ENCODE measurements at regions of chr2 and their contacts with region 1.

Region 1: DNA sequence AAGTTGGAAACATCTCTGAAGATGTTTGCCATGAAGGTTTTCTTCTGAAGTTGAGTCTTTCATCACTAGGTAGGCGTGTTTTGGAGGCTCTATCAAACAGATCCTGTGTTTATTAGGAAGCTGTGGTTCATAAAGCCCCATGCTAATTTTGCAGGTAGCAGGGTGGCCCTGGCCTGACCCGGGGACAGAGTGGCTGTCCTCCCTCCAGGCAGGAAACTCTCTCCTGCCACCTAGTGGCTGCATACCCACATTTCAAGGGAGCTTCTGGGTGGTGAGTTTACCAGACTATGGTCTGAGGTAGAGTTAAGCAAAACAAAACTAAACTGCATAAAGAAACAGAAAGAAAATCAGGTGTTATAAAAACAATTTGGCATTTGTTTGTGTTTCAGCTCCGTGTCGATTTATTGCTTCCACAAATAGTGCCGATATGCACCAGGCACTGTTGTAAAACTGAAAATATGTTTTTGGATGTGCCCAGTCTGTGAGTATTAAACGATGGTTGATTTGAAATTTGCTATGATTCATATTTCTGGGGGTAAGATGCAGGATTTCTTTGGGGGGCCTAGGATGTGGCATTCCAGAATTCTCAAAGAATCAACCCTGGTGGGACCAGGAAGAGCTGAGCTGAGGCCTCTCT is 26.0 kb upstream of the IL37 start:
- DNase-seq: peak; percentile 39
- ATAC-seq: peak; percentile 82
- H3K4me3 ChIP-seq: no peak overlapping the region
- H3K27ac ChIP-seq: no peak overlapping the region
- H3K4me1 ChIP-seq: peaks cover 32% of the 10 kb centered on the region
- H3K27me3 ChIP-seq: no peaks in the 10 kb centered on the region
- CTCF ChIP-seq: peak; percentile 92 to 93 (median 93)
- EP300 ChIP-seq: no peak
- POLR2A ChIP-seq: no peak
- RAD21 ChIP-seq: peak; percentile 94

Region 2: GRCh38 chr2:112321375-112322320 is 563.3 kb before region 1 on chr2:
- CTCF ChIA-PET with region 1: no interaction called
- POLR2A ChIA-PET with region 1: no interaction called
- RAD21 ChIA-PET with region 1: no interaction called
- SMC1A ChIA-PET with region 1: no interaction called
- in situ Hi-C with region 1: no loop called
- intact Hi-C with region 1: no loop called
- DNase-seq: no peak
- ATAC-seq: no peak
- H3K4me3 ChIP-seq: no peak overlapping the region
- H3K27ac ChIP-seq: no peak overlapping the region
- H3K4me1 ChIP-seq: no peaks in the 10 kb centered on the region
- H3K27me3 ChIP-seq: no peaks in the 10 kb centered on the region
- CTCF ChIP-seq: no peak
- EP300 ChIP-seq: no peak
- POLR2A ChIP-seq: no peak
- RAD21 ChIP-seq: no peak

Region 3: GRCh38 chr2:112626604-112627059 is 258.4 kb before region 1 on chr2:
- CTCF ChIA-PET with region 1: interaction called, 16 read pairs
- POLR2A ChIA-PET with region 1: no interaction called
- RAD21 ChIA-PET with region 1: interaction called, 10 read pairs
- SMC1A ChIA-PET with region 1: interaction called, 9 read pairs
- in situ Hi-C with region 1: no loop called
- intact Hi-C with region 1: no loop called
- DNase-seq: no peak
- ATAC-seq: peak; percentile 86
- H3K4me3 ChIP-seq: no peak overlapping the region
- H3K27ac ChIP-seq: no peak overlapping the region
- H3K4me1 ChIP-seq: peaks cover 19% of the 10 kb centered on the region
- H3K27me3 ChIP-seq: no peaks in the 10 kb centered on the region
- CTCF ChIP-seq: peak; percentile 91 to 95 (median 92)
- EP300 ChIP-seq: no peak
- POLR2A ChIP-seq: no peak
- RAD21 ChIP-seq: peak; percentile 94

Region 4: DNA sequence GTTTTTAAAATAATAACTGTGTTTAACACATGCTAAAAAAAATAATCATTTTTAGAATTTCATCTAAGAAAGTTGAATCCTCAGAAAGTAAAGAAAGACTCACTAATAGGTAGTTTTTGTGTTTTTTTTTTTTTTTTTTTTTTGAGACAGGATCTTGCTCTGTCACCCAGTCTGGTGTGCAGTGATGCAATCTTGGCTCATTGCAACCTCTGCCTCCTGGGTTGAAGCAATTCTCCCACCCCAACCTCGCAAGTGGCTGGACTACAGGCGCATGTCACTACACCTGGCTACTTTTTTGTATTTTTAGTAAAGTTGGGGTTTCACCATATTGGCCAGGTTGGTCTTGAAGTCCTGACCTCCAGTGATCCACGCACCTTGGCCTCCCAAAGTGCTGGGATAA is 127.7 kb before region 1 on chr2:
- CTCF ChIA-PET with region 1: interaction called, 496 read pairs
- POLR2A ChIA-PET with region 1: interaction called, 4 read pairs
- RAD21 ChIA-PET with region 1: interaction called, 281 read pairs
- SMC1A ChIA-PET with region 1: interaction called, 362 read pairs
- in situ Hi-C with region 1: no loop called
- intact Hi-C with region 1: no loop called
- DNase-seq: no peak
- ATAC-seq: no peak
- H3K4me3 ChIP-seq: no peak overlapping the region
- H3K27ac ChIP-seq: no peak overlapping the region
- H3K4me1 ChIP-seq: no peaks in the 10 kb centered on the region
- H3K27me3 ChIP-seq: no peaks in the 10 kb centered on the region
- CTCF ChIP-seq: no peak
- EP300 ChIP-seq: no peak
- POLR2A ChIP-seq: no peak
- RAD21 ChIP-seq: no peak

Region 5: DNA sequence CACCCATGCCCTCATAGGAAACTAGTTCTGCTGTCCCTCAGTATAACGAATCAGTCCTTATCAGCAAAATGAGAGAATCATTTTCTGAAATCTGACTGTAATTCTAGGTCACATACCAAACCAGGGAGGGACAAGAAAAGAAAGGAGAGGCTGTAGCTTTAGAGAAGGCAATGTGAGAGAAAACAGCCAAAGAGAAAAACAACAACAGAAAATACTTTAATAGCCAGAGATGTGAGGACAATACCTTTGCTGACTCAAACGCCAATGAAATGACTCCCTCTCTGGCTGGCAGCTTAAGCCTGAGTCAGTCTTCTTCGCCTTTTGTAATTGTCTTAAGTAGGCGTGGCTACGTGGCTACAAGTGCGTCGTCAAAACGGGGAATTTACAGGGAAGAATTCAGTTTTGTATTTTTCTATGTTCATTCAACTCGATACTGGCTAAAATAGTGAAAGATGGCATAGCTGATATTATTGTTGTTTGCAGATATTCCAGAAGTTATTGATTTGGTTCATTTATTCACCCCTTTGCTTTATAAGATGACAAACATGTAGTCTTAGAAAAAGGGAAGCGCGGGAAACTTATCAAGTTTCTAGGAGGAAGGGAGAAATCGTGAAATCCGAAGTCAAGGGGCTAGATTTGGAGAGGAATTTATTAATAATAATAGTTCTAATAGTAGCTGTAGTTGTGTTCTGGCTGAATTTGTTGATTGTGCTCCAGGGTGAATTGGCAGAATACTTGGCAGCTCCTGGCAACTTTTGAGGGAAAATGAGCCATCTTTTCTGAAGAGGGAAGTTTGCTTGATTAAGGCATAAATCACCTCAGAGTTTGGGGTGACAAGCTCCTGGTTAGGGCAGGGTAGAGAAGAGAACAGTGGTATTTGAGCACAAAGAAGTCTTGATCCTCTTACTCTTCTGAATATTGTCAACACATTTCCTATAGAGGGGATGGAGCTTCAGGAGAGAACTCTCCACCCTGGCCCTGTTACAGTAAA is 100.5 kb before region 1 on chr2 and contains the start of gene IL1A:
- CTCF ChIA-PET with region 1: interaction called, 17 read pairs
- POLR2A ChIA-PET with region 1: interaction called, 3 read pairs
- RAD21 ChIA-PET with region 1: interaction called, 22 read pairs
- SMC1A ChIA-PET with region 1: interaction called, 10 read pairs
- in situ Hi-C with region 1: no loop called
- intact Hi-C with region 1: no loop called
- DNase-seq: no peak
- ATAC-seq: no peak
- H3K4me3 ChIP-seq: no peak within 1 kb of the TSS
- H3K27ac ChIP-seq: peak within 1 kb of the TSS; percentile 62
- H3K4me1 ChIP-seq: peaks cover 23% of the 10 kb centered on the region
- H3K27me3 ChIP-seq: no peaks in the 10 kb centered on the region
- CTCF ChIP-seq: no peak
- EP300 ChIP-seq: no peak
- POLR2A ChIP-seq: peak; percentile 70
- RAD21 ChIP-seq: no peak
- polyA plus RNA-seq, gene IL1A: 5.7 to 8.7 TPM

Region 6: DNA sequence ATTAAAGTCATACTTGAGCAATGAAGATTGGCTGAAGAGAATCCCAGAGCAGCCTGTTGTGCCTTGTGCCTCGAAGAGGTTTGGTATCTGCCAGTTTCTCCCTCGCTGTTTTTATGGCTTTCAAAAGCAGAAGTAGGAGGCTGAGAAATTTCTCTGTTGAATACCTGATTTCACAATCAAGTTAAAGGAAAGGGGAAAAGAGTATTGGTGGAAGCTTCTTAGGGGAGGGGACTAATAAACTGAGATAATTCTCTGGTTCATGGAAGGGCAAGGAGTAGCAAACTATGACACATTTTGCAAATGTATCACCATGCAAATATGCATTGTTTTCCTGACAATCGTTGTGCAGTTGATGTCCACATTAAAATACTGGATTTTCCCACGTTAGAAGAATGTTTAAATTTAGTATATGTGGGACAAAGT is 48.3 kb before region 1 on chr2 and contains the start of gene IL1B:
- CTCF ChIA-PET with region 1: interaction called, 7 read pairs
- POLR2A ChIA-PET with region 1: interaction called, 3 read pairs
- RAD21 ChIA-PET with region 1: interaction called, 7 read pairs
- SMC1A ChIA-PET with region 1: interaction called, 33 read pairs
- in situ Hi-C with region 1: no loop called
- intact Hi-C with region 1: loop called (anchors 2 kb)
- DNase-seq: no peak
- ATAC-seq: peak; percentile 21
- H3K4me3 ChIP-seq: no peak within 1 kb of the TSS
- H3K27ac ChIP-seq: no peak within 1 kb of the TSS
- H3K4me1 ChIP-seq: peaks cover 34% of the 10 kb centered on the region
- H3K27me3 ChIP-seq: no peaks in the 10 kb centered on the region
- CTCF ChIP-seq: no peak
- EP300 ChIP-seq: no peak
- POLR2A ChIP-seq: no peak
- RAD21 ChIP-seq: no peak
- polyA plus RNA-seq, gene IL1B: 0.57 to 1.6 TPM

Region 7: GRCh38 chr2:112928856-112929255 is 43.9 kb after region 1 on chr2:
- CTCF ChIA-PET with region 1: interaction called, 12 read pairs
- POLR2A ChIA-PET with region 1: no interaction called
- RAD21 ChIA-PET with region 1: interaction called, 4 read pairs
- SMC1A ChIA-PET with region 1: interaction called, 5 read pairs
- in situ Hi-C with region 1: no loop called
- intact Hi-C with region 1: no loop called
- DNase-seq: no peak
- ATAC-seq: no peak
- H3K4me3 ChIP-seq: no peak overlapping the region
- H3K27ac ChIP-seq: no peak overlapping the region
- H3K4me1 ChIP-seq: no peaks in the 10 kb centered on the region
- H3K27me3 ChIP-seq: peaks cover 0 to 4% of the 10 kb centered on the region in 2 experiments; a peak in 1 of 4 replicates
- CTCF ChIP-seq: no peak
- EP300 ChIP-seq: no peak
- POLR2A ChIP-seq: no peak
- RAD21 ChIP-seq: no peak

Region 8: DNA sequence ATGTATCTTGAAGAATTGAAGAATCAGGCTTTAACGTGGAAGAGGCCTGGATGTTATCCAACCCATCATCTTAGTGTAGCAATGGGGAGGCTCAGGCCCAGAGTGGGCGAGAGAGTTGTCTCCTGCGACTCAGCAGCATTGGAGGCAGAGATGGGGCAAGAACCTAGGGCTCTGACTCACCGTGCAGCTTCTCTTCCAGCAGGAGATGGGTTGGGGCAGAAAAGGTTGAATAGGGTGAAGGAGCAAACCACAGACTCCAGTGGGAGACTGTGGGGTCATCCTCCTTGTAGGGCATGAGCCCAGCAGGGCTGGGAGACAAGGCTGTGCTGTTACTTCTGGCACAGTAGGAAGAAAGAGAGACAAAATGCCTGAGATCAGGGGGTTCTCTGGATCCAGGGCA is 175.4 kb after region 1 on chr2:
- CTCF ChIA-PET with region 1: no interaction called
- POLR2A ChIA-PET with region 1: no interaction called
- RAD21 ChIA-PET with region 1: no interaction called
- SMC1A ChIA-PET with region 1: no interaction called
- in situ Hi-C with region 1: no loop called
- intact Hi-C with region 1: no loop called
- DNase-seq: no peak
- ATAC-seq: no peak
- H3K4me3 ChIP-seq: no peak overlapping the region
- H3K27ac ChIP-seq: no peak overlapping the region
- H3K4me1 ChIP-seq: no peaks in the 10 kb centered on the region
- H3K27me3 ChIP-seq: no peaks in the 10 kb centered on the region
- CTCF ChIP-seq: no peak
- EP300 ChIP-seq: no peak
- POLR2A ChIP-seq: no peak
- RAD21 ChIP-seq: no peak

Region 9: GRCh38 chr2:113089916-113090315 is 204.9 kb after region 1 on chr2:
- CTCF ChIA-PET with region 1: no interaction called
- POLR2A ChIA-PET with region 1: no interaction called
- RAD21 ChIA-PET with region 1: no interaction called
- SMC1A ChIA-PET with region 1: no interaction called
- in situ Hi-C with region 1: no loop called
- intact Hi-C with region 1: no loop called
- DNase-seq: no peak
- ATAC-seq: no peak
- H3K4me3 ChIP-seq: no peak overlapping the region
- H3K27ac ChIP-seq: no peak overlapping the region
- H3K4me1 ChIP-seq: no peaks in the 10 kb centered on the region
- H3K27me3 ChIP-seq: no peaks in the 10 kb centered on the region; a peak in 1 of 4 replicates
- CTCF ChIP-seq: no peak
- EP300 ChIP-seq: no peak
- POLR2A ChIP-seq: no peak
- RAD21 ChIP-seq: no peak

Region 10: GRCh38 chr2:113768770-113769169 is 883.8 kb after region 1 on chr2:
- CTCF ChIA-PET with region 1: no interaction called
- POLR2A ChIA-PET with region 1: no interaction called
- RAD21 ChIA-PET with region 1: no interaction called
- SMC1A ChIA-PET with region 1: no interaction called
- in situ Hi-C with region 1: no loop called
- intact Hi-C with region 1: no loop called
- DNase-seq: no peak
- ATAC-seq: no peak
- H3K4me3 ChIP-seq: no peak overlapping the region
- H3K27ac ChIP-seq: no peak overlapping the region
- H3K4me1 ChIP-seq: no peaks in the 10 kb centered on the region
- H3K27me3 ChIP-seq: no peaks in the 10 kb centered on the region
- CTCF ChIP-seq: no peak
- EP300 ChIP-seq: no peak
- POLR2A ChIP-seq: no peak
- RAD21 ChIP-seq: no peak

Measured in GM12878 (cell line).